GM12878 (cell line): ENCODE measurements at regions of chr2 and their contacts with region 1.

Region 1: GRCh38 chr2:211745295-211746097 is 793.1 kb downstream of the ERBB4 start:
- DNase-seq: no peak
- ATAC-seq: peak; percentile 94
- H3K4me3 ChIP-seq: no peak overlapping the region
- H3K27ac ChIP-seq: no peak overlapping the region
- H3K4me1 ChIP-seq: no peaks in the 10 kb centered on the region
- H3K27me3 ChIP-seq: no peaks in the 10 kb centered on the region; a peak in 1 of 4 replicates
- CTCF ChIP-seq: peak; percentile 78 to 87 (median 86)
- EP300 ChIP-seq: no peak
- POLR2A ChIP-seq: no peak
- RAD21 ChIP-seq: peak; percentile 97

Region 2: DNA sequence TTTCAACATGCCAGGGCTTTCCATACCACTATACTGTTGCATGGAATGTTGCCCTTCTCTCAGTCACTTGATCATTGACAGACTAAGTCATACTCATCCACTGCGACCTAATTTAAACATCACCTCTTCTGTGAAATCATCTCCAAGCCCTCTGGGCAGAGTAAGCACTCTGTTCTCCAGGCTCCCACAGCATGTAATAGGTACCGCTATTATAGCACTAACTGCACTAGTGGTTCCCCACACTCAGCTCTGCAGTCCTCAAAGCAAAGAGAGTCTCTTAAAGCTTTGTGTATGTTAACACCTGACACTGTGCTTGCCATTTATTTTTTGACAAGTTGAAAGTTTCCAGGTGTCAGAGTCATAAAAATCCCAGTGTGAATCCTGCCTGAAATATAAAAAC is 154.1 kb before region 1 on chr2:
- CTCF ChIA-PET with region 1: no interaction called
- POLR2A ChIA-PET with region 1: no interaction called
- RAD21 ChIA-PET with region 1: no interaction called
- SMC1A ChIA-PET with region 1: no interaction called
- in situ Hi-C with region 1: no loop called
- intact Hi-C with region 1: no loop called
- DNase-seq: no peak
- ATAC-seq: no peak
- H3K4me3 ChIP-seq: no peak overlapping the region
- H3K27ac ChIP-seq: no peak overlapping the region
- H3K4me1 ChIP-seq: no peaks in the 10 kb centered on the region
- H3K27me3 ChIP-seq: no peaks in the 10 kb centered on the region
- CTCF ChIP-seq: no peak
- EP300 ChIP-seq: no peak
- POLR2A ChIP-seq: no peak
- RAD21 ChIP-seq: no peak

Region 3: GRCh38 chr2:211674715-211675114 is 70.8 kb before region 1 on chr2:
- CTCF ChIA-PET with region 1: no interaction called
- POLR2A ChIA-PET with region 1: no interaction called
- RAD21 ChIA-PET with region 1: no interaction called
- SMC1A ChIA-PET with region 1: no interaction called
- in situ Hi-C with region 1: no loop called
- intact Hi-C with region 1: no loop called
- DNase-seq: no peak
- ATAC-seq: no peak
- H3K4me3 ChIP-seq: no peak overlapping the region
- H3K27ac ChIP-seq: no peak overlapping the region
- H3K4me1 ChIP-seq: no peaks in the 10 kb centered on the region
- H3K27me3 ChIP-seq: no peaks in the 10 kb centered on the region
- CTCF ChIP-seq: no peak
- EP300 ChIP-seq: no peak
- POLR2A ChIP-seq: no peak
- RAD21 ChIP-seq: no peak

Region 4: GRCh38 chr2:211730215-211730614 is 15.3 kb before region 1 on chr2:
- CTCF ChIA-PET with region 1: interaction called, 5 read pairs
- POLR2A ChIA-PET with region 1: no interaction called
- RAD21 ChIA-PET with region 1: interaction called, 3 read pairs
- SMC1A ChIA-PET with region 1: interaction called, 15 read pairs
- in situ Hi-C with region 1: no loop called
- intact Hi-C with region 1: no loop called
- DNase-seq: no peak
- ATAC-seq: no peak
- H3K4me3 ChIP-seq: no peak overlapping the region
- H3K27ac ChIP-seq: no peak overlapping the region
- H3K4me1 ChIP-seq: no peaks in the 10 kb centered on the region
- H3K27me3 ChIP-seq: no peaks in the 10 kb centered on the region
- CTCF ChIP-seq: no peak
- EP300 ChIP-seq: no peak
- POLR2A ChIP-seq: no peak
- RAD21 ChIP-seq: no peak

Region 5: DNA sequence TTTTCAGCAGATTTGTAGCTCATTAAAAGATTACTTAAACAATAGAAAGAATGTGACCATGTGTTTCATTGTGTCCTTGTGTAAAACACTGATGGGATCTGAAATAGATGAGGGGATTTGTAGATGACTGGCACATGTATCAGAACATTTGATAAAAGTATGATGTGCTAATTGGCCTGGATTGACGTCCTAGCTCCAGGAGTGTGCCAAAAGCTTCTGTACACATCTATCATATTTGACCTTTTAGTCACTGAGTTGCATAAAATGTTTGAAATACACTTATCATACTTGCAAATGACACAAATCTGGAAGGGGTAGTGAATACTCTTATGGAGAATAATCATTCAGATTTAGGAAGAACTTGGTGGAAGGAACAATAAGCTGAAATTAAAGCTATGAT is 14.6 kb after region 1 on chr2:
- CTCF ChIA-PET with region 1: interaction called, 20 read pairs
- POLR2A ChIA-PET with region 1: no interaction called
- RAD21 ChIA-PET with region 1: no interaction called
- SMC1A ChIA-PET with region 1: interaction called, 4 read pairs
- in situ Hi-C with region 1: no loop called
- intact Hi-C with region 1: no loop called
- DNase-seq: no peak
- ATAC-seq: no peak
- H3K4me3 ChIP-seq: no peak overlapping the region
- H3K27ac ChIP-seq: no peak overlapping the region
- H3K4me1 ChIP-seq: no peaks in the 10 kb centered on the region
- H3K27me3 ChIP-seq: no peaks in the 10 kb centered on the region
- CTCF ChIP-seq: no peak
- EP300 ChIP-seq: no peak
- POLR2A ChIP-seq: no peak
- RAD21 ChIP-seq: no peak

Region 6: DNA sequence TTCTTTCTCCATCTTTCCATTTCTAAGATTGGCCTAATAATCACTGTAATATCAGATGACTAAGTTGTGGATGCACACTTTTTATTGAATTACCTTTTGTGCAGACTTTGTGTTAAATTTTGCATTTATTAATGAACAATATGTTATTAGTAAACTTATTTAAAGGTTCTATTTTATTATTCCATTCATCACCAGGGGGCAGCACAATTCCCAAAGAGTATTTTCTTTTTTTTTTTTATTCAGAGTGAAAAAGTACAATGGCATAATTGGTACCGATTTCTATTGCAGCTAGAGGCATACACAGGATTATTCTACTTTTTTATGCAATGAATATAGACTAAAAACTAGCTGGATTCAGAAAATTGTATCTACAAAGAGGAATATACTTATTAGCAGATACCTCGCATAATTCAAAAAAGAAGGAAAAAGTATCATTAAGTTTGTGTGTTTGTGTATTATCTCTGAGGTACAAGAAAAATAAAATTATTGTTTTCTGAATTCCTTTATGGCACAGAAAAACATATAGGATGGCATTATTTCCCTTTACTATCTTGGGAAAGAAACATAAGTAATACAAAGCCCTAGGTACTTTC is 402.5 kb after region 1 on chr2:
- CTCF ChIA-PET with region 1: interaction called, 3 read pairs
- POLR2A ChIA-PET with region 1: no interaction called
- RAD21 ChIA-PET with region 1: no interaction called
- SMC1A ChIA-PET with region 1: no interaction called
- in situ Hi-C with region 1: no loop called
- intact Hi-C with region 1: loop called (anchors 10 kb)
- DNase-seq: no peak
- ATAC-seq: no peak
- H3K4me3 ChIP-seq: no peak overlapping the region
- H3K27ac ChIP-seq: no peak overlapping the region
- H3K4me1 ChIP-seq: no peaks in the 10 kb centered on the region
- H3K27me3 ChIP-seq: no peaks in the 10 kb centered on the region; a peak in 1 of 4 replicates
- CTCF ChIP-seq: peak in 1 of 3 experiments; percentile 25; a peak in 2 of 6 replicates
- EP300 ChIP-seq: no peak
- POLR2A ChIP-seq: no peak
- RAD21 ChIP-seq: no peak

Region 7: GRCh38 chr2:212249451-212249850 is 504.0 kb after region 1 on chr2:
- CTCF ChIA-PET with region 1: interaction called, 25 read pairs
- POLR2A ChIA-PET with region 1: no interaction called
- RAD21 ChIA-PET with region 1: interaction called, 13 read pairs
- SMC1A ChIA-PET with region 1: interaction called, 18 read pairs
- in situ Hi-C with region 1: no loop called
- intact Hi-C with region 1: loop called (anchors 1 kb)
- DNase-seq: no peak
- ATAC-seq: no peak
- H3K4me3 ChIP-seq: no peak overlapping the region
- H3K27ac ChIP-seq: no peak overlapping the region
- H3K4me1 ChIP-seq: no peaks in the 10 kb centered on the region
- H3K27me3 ChIP-seq: no peaks in the 10 kb centered on the region
- CTCF ChIP-seq: peak; percentile 6 to 28 (median 17); a peak in 1 of 6 replicates
- EP300 ChIP-seq: no peak
- POLR2A ChIP-seq: no peak
- RAD21 ChIP-seq: peak; percentile 53; the same call in 1 of the 2 replicates

Region 8: GRCh38 chr2:212528106-212528856 is 782.8 kb after region 1 on chr2:
- CTCF ChIA-PET with region 1: interaction called, 12 read pairs
- POLR2A ChIA-PET with region 1: no interaction called
- RAD21 ChIA-PET with region 1: no interaction called
- SMC1A ChIA-PET with region 1: interaction called, 4 read pairs
- in situ Hi-C with region 1: no loop called
- intact Hi-C with region 1: no loop called
- DNase-seq: no peak
- ATAC-seq: no peak
- H3K4me3 ChIP-seq: no peak overlapping the region
- H3K27ac ChIP-seq: no peak overlapping the region
- H3K4me1 ChIP-seq: no peaks in the 10 kb centered on the region
- H3K27me3 ChIP-seq: no peaks in the 10 kb centered on the region; a peak in 1 of 4 replicates
- CTCF ChIP-seq: peak in 1 of 3 experiments; percentile 15; a peak in 2 of 6 replicates
- EP300 ChIP-seq: no peak
- POLR2A ChIP-seq: no peak
- RAD21 ChIP-seq: peak; percentile 15; the same call in 1 of the 2 replicates

Region 9: DNA sequence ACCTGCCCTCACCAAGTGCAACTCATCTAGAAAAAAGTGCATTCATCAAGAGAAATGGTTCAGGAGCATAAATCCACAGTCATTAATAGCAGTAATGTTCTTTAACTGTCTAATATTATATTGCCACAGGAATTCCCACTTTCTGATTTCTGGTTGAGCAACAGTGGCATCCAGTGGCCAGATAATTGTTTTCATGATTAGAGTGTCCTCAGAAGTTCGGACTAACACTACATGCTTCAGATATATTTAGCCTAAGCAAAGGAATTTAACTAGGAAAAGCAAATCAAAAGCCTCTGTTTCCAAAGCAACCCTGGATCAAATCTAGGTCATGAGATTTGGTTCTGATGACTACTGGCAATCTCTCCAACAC is 802.9 kb after region 1 on chr2:
- CTCF ChIA-PET with region 1: interaction called, 6 read pairs
- POLR2A ChIA-PET with region 1: no interaction called
- RAD21 ChIA-PET with region 1: no interaction called
- SMC1A ChIA-PET with region 1: interaction called, 5 read pairs
- in situ Hi-C with region 1: no loop called
- intact Hi-C with region 1: loop called (anchors 1 kb)
- DNase-seq: no peak
- ATAC-seq: no peak
- H3K4me3 ChIP-seq: no peak overlapping the region
- H3K27ac ChIP-seq: no peak overlapping the region
- H3K4me1 ChIP-seq: no peaks in the 10 kb centered on the region
- H3K27me3 ChIP-seq: no peaks in the 10 kb centered on the region
- CTCF ChIP-seq: peak in 2 of 3 experiments; percentile 3 to 31; a peak in 3 of 6 replicates
- EP300 ChIP-seq: no peak
- POLR2A ChIP-seq: no peak
- RAD21 ChIP-seq: peak; percentile 55